CD4-positive, alpha-beta memory T cell (primary cell): ENCODE measurements at regions of chr7 and their contacts with region 1.

Region 1: GRCh38 chr7:111486472-111487142 is 75.7 kb downstream of the IMMP2L start:
- DNase-seq: peak in 4 of 5 donors; percentile 14 to 24 (median 19)
- H3K4me3 ChIP-seq: no peak overlapping the region
- H3K4me3 Mint-ChIP-seq: no peak overlapping the region
- H3K27ac ChIP-seq: no peak overlapping the region
- H3K27ac Mint-ChIP-seq: no peak overlapping the region
- H3K4me1 ChIP-seq: no peaks in the 10 kb centered on the region
- H3K4me1 Mint-ChIP-seq: peaks cover 0 to 1% (median 0%) of the 10 kb centered on the region in 4 donors
- H3K27me3 ChIP-seq: no peaks in the 10 kb centered on the region
- H3K27me3 Mint-ChIP-seq: no peaks in the 10 kb centered on the region

Region 2: GRCh38 chr7:110590415-110590814 is 896.2 kb before region 1 on chr7:
- CTCF ChIA-PET with region 1: no interaction called
- POLR2A ChIA-PET with region 1: no interaction called
- intact Hi-C with region 1: loop called (anchors 5 kb)
- DNase-seq: no peak
- H3K4me3 ChIP-seq: no peak overlapping the region
- H3K4me3 Mint-ChIP-seq: no peak overlapping the region
- H3K27ac ChIP-seq: no peak overlapping the region
- H3K27ac Mint-ChIP-seq: no peak overlapping the region
- H3K4me1 ChIP-seq: no peaks in the 10 kb centered on the region
- H3K4me1 Mint-ChIP-seq: peaks cover 0 to 1% (median 0%) of the 10 kb centered on the region in 4 donors
- H3K27me3 ChIP-seq: no peaks in the 10 kb centered on the region
- H3K27me3 Mint-ChIP-seq: no peaks in the 10 kb centered on the region

Region 3: GRCh38 chr7:111089822-111090426 is 396.7 kb before region 1 on chr7:
- CTCF ChIA-PET with region 1: no interaction called
- POLR2A ChIA-PET with region 1: no interaction called
- intact Hi-C with region 1: loop called (anchors 1 kb)
- DNase-seq: peak in 4 of 5 donors; percentile 22 to 42 (median 32)
- H3K4me3 ChIP-seq: no peak overlapping the region
- H3K4me3 Mint-ChIP-seq: peak overlapping the region in 1 of 8 donors; percentile 22
- H3K27ac ChIP-seq: no peak overlapping the region
- H3K27ac Mint-ChIP-seq: no peak overlapping the region
- H3K4me1 ChIP-seq: peaks cover 7% of the 10 kb centered on the region
- H3K4me1 Mint-ChIP-seq: peaks cover 5 to 17% (median 9%) of the 10 kb centered on the region in 4 donors
- H3K27me3 ChIP-seq: no peaks in the 10 kb centered on the region
- H3K27me3 Mint-ChIP-seq: no peaks in the 10 kb centered on the region